Endothelial cell of umbilical vein (primary cell): ENCODE measurements at regions of chr22 and their contacts with region 1.

Region 1: GRCh38 chr22:37623075-37624016 is 14.7 kb downstream of the GGA1 start:
- DNase-seq: peak; percentile 44
- H3K4me3 ChIP-seq: no peak overlapping the region
- H3K27ac ChIP-seq: no peak overlapping the region
- H3K4me1 ChIP-seq: peaks cover 7% of the 10 kb centered on the region
- H3K27me3 ChIP-seq: no peaks in the 10 kb centered on the region
- CTCF ChIP-seq: peak; percentile 51 to 87
- POLR2A ChIP-seq: no peak

Region 2: DNA sequence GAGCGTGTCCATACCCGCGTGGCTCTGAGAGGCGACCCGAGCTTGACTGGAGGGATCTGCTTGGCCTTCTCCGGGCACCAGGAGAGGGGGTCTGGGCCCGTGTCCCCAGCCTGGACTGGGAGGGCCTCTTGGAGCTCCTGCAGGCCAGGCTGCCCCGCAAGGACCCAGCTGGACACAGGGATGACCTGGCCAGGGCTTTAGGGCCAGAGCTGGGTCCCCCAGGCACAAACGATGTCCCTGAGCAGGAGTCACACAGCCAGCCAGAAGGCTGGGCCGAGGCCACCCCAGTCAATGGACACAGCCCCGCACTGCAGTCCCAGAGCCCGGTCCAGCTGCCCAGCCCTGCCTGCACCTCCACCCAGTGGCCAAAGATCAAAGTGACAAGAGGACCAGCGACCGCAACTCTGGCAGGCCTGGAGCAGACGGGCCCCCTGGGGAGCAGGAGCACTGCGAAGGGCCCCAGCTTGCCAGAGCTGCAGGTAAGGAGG is 111.7 kb after region 1 on chr22:
- CTCF ChIA-PET with region 1: no interaction called
- POLR2A ChIA-PET with region 1: no interaction called
- dilution Hi-C with region 1: no loop called
- intact Hi-C with region 1: loop called (anchors 1 kb)
- DNase-seq: no peak
- H3K4me3 ChIP-seq: no peak overlapping the region
- H3K27ac ChIP-seq: no peak overlapping the region
- H3K4me1 ChIP-seq: no peaks in the 10 kb centered on the region
- H3K27me3 ChIP-seq: no peaks in the 10 kb centered on the region
- CTCF ChIP-seq: peak; percentile 24 to 57
- POLR2A ChIP-seq: no peak